ENCODE measurements at regions of chr12 and their contacts with region 1.

Region 1: DNA sequence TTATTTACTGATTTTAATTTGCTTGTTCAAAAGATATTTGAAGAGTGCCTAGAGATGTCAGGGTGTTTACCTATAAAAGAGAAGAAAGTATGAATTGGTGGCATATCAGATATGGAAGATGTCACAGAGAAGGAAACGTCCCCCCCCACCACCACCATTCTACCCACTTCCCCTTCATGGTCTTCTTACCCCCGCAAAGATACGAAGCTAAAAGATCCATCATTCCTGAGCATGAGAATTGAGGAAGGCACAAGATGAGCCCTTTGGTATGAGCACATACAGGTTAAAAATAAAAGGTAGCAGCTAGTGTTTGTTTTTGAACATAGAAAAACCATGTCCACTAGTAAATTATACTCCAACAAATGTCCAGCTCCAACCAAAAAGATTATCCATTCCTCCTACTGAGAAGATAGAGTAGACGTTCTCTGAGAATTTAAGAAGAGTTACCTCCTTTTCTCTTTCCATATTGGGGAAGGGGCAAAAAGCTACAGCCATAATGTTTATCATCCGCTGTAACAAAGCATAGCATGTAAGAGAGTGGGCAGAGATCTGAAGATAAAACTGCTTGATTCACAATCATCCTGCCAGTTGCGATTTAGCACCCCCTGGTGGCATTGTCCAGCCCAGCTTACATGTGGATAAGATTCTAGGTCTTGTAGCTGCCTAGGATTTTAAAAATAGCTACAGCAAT is 29.1 kb downstream of the NFYB start:
- DNase-seq: peak; percentile 69 to 96 (median 89)

Region 2: DNA sequence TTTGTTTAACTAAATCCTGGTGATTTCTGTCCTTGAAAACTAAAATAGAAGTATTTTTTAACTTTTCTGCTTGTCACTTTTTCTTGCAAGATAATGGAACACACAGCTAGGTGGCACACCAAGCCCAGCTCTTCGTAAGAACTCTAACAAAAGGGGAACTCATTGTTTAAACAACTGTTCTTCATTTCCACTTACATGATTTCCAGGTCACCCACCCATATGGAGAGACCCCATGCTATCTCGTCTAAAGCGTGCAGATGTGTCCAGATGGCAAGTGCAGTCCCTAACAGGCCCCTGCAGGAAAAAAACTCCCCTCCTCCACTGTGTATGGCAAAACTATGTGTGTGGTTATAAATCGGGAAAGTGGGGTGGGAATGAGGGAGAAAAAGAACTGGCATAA is 224.6 kb before region 1 on chr12:
- intact Hi-C with region 1: loop called (anchors 5 kb)
- DNase-seq: peak in 31 of 42 donors; percentile 6 to 69 (median 34)

Measured in head of caudate nucleus (tissue), 42 donors.